Astrocyte of the cerebellum (primary cell): ENCODE measurements at regions of chr11 and their contacts with region 1.

Region 1: DNA sequence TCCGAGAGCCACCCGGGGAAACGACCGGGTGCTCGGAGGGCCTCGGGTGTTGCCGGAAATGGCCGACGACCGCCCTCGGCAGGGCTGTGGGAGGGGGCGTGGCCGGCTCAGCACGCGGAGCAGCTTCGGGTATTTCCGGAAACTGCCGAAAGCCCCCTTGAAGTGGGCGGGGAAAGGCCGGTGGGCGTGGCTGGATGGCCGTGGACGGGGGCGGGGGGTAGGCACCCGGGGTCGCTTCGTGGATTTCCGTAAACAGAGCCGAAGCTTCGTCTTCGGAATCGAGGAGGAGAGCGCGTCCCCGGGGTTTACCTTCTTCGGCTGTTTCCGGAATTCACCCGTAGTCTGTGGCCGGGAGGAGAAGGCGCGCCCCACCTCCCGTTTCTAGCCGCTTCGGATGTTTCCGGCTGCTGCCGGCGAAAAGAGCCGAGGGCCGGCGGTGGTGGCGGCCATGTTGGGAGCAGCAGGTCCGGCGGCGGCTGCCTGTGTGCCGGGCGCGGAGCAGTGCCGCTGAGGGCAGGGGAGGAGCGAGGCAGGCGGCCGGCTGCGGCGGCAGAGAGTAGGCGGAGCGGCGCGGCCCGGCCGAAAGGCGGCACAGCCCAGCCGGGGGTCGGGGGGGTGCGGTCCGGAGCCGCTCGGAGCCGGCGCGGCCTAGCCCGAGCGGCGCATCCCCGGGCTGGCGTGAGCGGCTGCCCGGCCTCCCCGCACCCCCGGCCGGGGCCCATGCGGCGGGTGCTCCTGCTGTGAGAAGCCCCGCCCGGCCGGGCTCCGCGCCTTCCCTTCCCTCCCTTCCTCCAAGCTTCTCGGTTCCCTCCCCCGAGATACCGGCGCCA is at the start of gene MARK2:
- DNase-seq: peak; percentile 96
- H3K4me3 ChIP-seq: peak within 1 kb of the TSS; percentile 91
- CTCF ChIP-seq: no peak

Region 2: GRCh38 chr11:63802637-63803414 is 36.1 kb before region 1 on chr11:
- in situ Hi-C with region 1: no loop called
- DNase-seq: no peak
- H3K4me3 ChIP-seq: no peak overlapping the region
- CTCF ChIP-seq: no peak

Region 3: GRCh38 chr11:63958008-63958407 is 119.1 kb after region 1 on chr11:
- in situ Hi-C with region 1: loop called (anchors 5 kb)
- DNase-seq: no peak
- H3K4me3 ChIP-seq: no peak overlapping the region
- CTCF ChIP-seq: no peak